ENCODE measurements at regions of chr6 and their contacts with region 1.

Region 1: DNA sequence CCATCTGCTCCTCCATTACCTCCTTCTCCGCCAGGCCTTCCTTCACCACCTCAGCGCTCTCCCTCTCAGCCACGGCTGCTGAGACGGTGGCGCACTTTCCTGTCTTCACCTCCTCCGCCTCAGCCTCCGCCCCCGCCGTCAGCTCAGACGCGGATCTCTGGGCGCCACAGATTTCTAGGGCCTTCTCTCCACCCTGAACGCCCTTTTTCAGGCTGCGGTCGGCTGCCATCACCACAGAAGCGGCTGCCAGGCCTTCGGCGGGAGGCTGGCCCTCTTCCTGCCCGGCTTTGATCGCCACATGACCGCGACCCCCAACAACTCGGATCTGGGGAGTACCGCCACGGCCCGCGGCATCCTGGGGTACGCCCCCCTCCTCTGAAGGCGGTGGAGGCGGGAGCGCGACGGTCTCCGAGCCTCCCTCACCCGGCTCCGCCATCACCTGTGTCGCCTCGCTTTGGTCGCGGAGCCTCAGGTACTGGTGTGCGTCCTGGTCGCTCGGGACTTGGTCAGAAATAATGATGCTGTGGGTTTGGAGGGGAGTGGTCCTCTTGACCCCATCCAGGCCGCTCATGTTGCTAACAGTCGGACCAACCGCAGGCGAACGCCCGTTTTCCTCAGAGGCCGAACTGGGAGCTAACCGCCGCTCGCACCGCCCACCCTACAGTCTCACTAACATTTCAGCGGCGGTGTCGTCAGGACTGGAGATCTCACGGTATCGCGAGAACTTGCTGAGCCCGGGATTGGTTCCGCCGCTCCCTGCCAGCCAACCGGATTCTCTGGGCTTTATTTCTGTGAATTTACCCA is at the start of gene TSPYL1:
- DNase-seq: peak; percentile 90
- ATAC-seq: peak; percentile 86
- H3K4me3 Mint-ChIP-seq: peak within 1 kb of the TSS; percentile 97
- H3K27ac Mint-ChIP-seq: peak within 1 kb of the TSS; percentile 99
- H3K4me1 Mint-ChIP-seq: peaks cover 41% of the 10 kb centered on the region
- H3K27me3 Mint-ChIP-seq: no peaks in the 10 kb centered on the region
- total RNA-seq, gene TSPYL1: 59.9 to 66.8 TPM

Region 2: GRCh38 chr6:116100419-116101301 is 178.8 kb before region 1 on chr6 and contains the start of gene NT5DC1:
- POLR2A ChIA-PET with region 1: interaction called, 10 read pairs
- DNase-seq: peak; percentile 91
- ATAC-seq: peak; percentile 93
- H3K4me3 Mint-ChIP-seq: peak within 1 kb of the TSS; percentile 94
- H3K27ac Mint-ChIP-seq: peak within 1 kb of the TSS; percentile 87
- H3K4me1 Mint-ChIP-seq: peaks cover 31% of the 10 kb centered on the region
- H3K27me3 Mint-ChIP-seq: no peaks in the 10 kb centered on the region
- total RNA-seq, gene NT5DC1: 31.5 to 36.3 TPM

Region 3: DNA sequence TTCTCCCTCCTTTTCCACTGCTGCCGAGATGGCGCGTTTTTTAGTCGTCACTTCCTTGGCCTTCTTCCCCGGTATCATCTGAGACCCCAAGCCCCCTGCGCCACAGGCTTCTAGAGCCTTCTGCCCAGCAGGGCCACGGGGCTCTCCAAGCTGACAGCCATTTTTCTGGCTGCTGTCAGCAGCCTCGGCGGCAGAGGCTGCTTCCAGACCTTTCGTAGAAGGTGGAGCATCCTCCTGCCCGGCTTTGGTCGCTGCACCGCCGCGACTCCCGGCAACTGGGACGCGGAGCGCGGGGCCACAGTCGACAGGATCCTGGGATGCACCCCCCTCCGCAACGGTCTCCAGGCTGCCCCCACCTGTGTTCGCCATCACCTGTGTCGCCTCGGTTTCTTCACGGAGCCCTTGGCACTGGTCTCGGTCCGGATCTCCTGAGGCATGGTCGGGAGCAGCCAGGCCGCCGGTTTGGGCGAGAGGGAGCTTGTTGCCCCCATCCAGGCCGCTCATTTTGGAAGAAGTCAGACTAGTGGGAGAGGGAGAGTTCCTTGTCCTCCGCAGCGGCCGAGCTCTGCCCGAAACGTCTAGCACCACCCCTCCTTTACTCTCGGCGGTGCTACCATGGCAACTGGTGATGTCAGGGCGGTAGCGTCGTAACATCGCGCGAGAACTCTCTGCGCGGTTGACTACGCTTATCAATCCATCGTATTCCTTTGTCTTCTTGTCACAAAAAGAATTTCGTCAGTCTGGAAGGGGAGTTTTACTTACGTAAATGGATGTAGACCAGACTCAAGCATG is 25.8 kb before region 1 on chr6 and contains the start of gene TSPYL4:
- POLR2A ChIA-PET with region 1: interaction called, 47 read pairs
- DNase-seq: peak; percentile 85
- ATAC-seq: peak; percentile 94
- H3K4me3 Mint-ChIP-seq: no peak within 1 kb of the TSS
- H3K27ac Mint-ChIP-seq: no peak within 1 kb of the TSS
- H3K4me1 Mint-ChIP-seq: peaks cover 26% of the 10 kb centered on the region
- H3K27me3 Mint-ChIP-seq: no peaks in the 10 kb centered on the region
- total RNA-seq, gene TSPYL4: 19.2 to 19.4 TPM

Region 4: GRCh38 chr6:116268589-116269293 is 10.7 kb before region 1 on chr6:
- POLR2A ChIA-PET with region 1: interaction called, 14 read pairs
- DNase-seq: no peak
- ATAC-seq: peak; percentile 56
- H3K4me3 Mint-ChIP-seq: no peak overlapping the region
- H3K27ac Mint-ChIP-seq: no peak overlapping the region
- H3K4me1 Mint-ChIP-seq: peaks cover 8% of the 10 kb centered on the region
- H3K27me3 Mint-ChIP-seq: no peaks in the 10 kb centered on the region

Region 5: DNA sequence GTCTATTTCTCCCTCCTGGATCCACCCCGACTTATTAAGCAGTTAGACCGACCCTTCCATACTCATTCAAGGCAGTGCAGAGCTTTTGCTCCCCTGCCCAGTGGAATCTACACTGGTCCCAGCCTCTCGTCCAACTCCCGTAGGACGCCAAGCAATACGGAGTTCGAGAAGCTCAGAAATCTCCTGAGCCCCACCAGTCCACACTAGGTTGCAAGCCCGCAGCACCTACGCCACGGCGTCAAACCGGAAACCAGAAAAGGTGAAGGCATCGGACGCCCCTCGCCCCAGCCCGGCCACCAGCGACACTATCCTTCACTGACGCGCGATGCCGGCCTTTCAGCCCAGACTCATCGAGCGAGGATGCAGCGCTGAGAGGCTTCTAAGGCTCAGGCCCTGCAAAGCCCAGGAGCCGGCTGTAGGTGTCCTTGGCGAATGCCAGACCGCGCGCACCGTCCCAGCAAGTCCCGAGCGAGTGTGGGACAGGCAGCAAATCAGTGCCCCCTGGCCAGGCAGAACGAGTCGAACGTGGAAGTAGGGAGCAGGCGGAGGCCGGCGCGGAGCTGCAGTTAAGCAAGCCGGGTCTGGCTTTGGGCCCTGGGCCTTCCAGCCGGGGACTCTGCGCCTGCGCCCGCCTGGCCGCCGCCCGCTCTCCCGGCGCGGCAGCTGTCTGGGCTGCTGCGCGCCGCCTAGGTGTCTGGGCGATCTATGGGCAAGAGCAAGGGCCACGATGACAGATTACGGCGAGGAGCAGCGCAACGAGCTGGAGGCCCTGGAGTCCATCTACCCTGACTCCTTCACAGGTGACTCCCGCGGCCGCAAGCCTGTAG is 291.6 kb after region 1 on chr6 and contains the start of gene RWDD1:
- POLR2A ChIA-PET with region 1: interaction called, 40 read pairs
- DNase-seq: peak; percentile 95
- ATAC-seq: peak; percentile 93
- H3K4me3 Mint-ChIP-seq: peak within 1 kb of the TSS; percentile 97
- H3K27ac Mint-ChIP-seq: peak within 1 kb of the TSS; percentile 98
- H3K4me1 Mint-ChIP-seq: peaks cover 27% of the 10 kb centered on the region
- H3K27me3 Mint-ChIP-seq: no peaks in the 10 kb centered on the region
- total RNA-seq, gene RWDD1: 33.2 to 36.6 TPM

Measured in activated naive CD8-positive, alpha-beta T cell treated with anti-CD3 and anti-CD28 coated beads, Interleukin-2, amount 10 ng/mL, durations not matched to agents 7 days and 5 days (primary cell).